ENCODE measurements at regions of chr7 and their contacts with region 1.

Region 1: DNA sequence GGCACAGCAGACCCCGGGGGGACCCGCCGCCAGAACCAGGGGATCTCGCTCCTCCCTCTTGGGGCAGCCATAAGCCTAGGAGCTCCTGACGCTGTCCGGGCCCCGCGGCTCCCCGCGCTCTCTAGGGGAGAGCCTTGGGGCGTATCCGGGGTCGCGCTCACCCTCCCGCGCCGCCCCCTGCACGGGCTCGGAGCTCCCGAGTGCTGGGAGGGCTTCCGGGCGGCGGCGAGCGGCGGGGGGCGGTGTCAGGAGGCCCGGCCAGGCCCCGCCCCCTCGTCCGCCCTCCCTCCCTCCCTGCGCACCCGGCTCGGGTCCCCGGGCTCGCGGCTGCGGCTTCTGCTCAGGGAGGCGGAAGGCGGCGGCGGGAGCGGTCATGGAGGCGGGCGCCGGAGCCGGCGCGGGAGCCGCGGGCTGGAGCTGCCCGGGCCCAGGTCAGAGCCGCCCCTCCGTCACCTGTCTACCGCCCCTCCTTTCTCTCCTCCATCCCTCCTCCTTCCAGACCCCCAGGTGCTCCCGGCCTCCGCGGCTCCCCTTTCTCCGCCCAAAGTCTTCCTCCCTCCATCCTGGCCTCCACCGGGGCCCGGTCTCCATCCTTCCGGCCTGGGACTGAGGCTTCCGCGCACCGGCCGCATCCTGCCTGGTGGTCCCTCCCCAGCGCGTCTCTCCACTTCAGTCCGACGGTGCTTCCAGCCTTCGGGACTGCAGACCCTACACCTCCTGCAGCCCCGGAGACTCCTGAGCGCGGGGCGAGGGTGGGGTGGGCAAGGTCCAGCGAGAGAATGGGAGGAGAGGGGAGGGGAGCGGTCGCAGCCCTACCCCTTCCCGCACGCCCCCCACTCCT is 427 bp upstream of the CCDC136 start:
- DNase-seq: peak; percentile 78 to 81 (median 79)
- H3K4me3 ChIP-seq: peak overlapping the region; percentile 42 to 62
- H3K4me3 Mint-ChIP-seq: peak overlapping the region; percentile 67 to 88 (median 80)
- H3K27ac ChIP-seq: peak overlapping the region; percentile 48
- H3K27ac Mint-ChIP-seq: peak overlapping the region in 5 of 7 donors; percentile 14 to 82 (median 54)
- H3K4me1 ChIP-seq: peaks cover 15% of the 10 kb centered on the region
- H3K4me1 Mint-ChIP-seq: peaks cover 9 to 25% (median 16%) of the 10 kb centered on the region in 4 donors
- H3K27me3 ChIP-seq: no peaks in the 10 kb centered on the region
- H3K27me3 Mint-ChIP-seq: no peaks in the 10 kb centered on the region

Region 2: GRCh38 chr7:128739048-128739962 is 52.0 kb before region 1 on chr7 and contains the start of gene CALU:
- CTCF ChIA-PET with region 1: interaction called, 3 read pairs
- POLR2A ChIA-PET with region 1: interaction called, 11 read pairs
- intact Hi-C with region 1: loop called (anchors 2 kb)
- DNase-seq: peak; percentile 93 to 95 (median 94)
- H3K4me3 ChIP-seq: peak within 1 kb of the TSS; percentile 80 to 82
- H3K4me3 Mint-ChIP-seq: peak within 1 kb of the TSS; percentile 98 to 100 (median 99)
- H3K27ac ChIP-seq: peak within 1 kb of the TSS; percentile 91
- H3K27ac Mint-ChIP-seq: peak within 1 kb of the TSS; percentile 97 to 100 (median 98)
- H3K4me1 ChIP-seq: peaks cover 38% of the 10 kb centered on the region
- H3K4me1 Mint-ChIP-seq: peaks cover 27 to 50% (median 39%) of the 10 kb centered on the region in 4 donors
- H3K27me3 ChIP-seq: no peaks in the 10 kb centered on the region
- H3K27me3 Mint-ChIP-seq: peaks cover 0 to 3% of the 10 kb centered on the region in 2 donors
- total RNA-seq, gene CALU: 18.4 to 20.6 TPM